Activated CD4-positive, alpha-beta memory T cell treated with anti-CD3 and anti-CD28 coated beads for 36 hours (primary cell): ENCODE measurements at regions of chr17 and their contacts with region 1.

Region 1: GRCh38 chr17:2244545-2245525 is 58.8 kb downstream of the SMG6 start:
- DNase-seq: peak; percentile 89
- H3K4me3 Mint-ChIP-seq: no peak overlapping the region
- H3K27ac Mint-ChIP-seq: peak overlapping the region; percentile 8
- H3K4me1 Mint-ChIP-seq: peaks cover 34% of the 10 kb centered on the region
- H3K27me3 Mint-ChIP-seq: no peaks in the 10 kb centered on the region

Region 2: GRCh38 chr17:2054512-2055291 is 190.1 kb before region 1 on chr17 and contains the start of gene HIC1:
- CTCF ChIA-PET with region 1: interaction called, 288 read pairs
- POLR2A ChIA-PET with region 1: interaction called, 41 read pairs
- intact Hi-C with region 1: loop called (anchors 1 kb)
- DNase-seq: peak; percentile 87
- H3K4me3 Mint-ChIP-seq: peak within 1 kb of the TSS; percentile 68
- H3K27ac Mint-ChIP-seq: peak within 1 kb of the TSS; percentile 33
- H3K4me1 Mint-ChIP-seq: peaks cover 16% of the 10 kb centered on the region
- H3K27me3 Mint-ChIP-seq: peaks cover 12% of the 10 kb centered on the region
- total RNA-seq, gene HIC1: 13.1 to 13.2 TPM

Region 3: DNA sequence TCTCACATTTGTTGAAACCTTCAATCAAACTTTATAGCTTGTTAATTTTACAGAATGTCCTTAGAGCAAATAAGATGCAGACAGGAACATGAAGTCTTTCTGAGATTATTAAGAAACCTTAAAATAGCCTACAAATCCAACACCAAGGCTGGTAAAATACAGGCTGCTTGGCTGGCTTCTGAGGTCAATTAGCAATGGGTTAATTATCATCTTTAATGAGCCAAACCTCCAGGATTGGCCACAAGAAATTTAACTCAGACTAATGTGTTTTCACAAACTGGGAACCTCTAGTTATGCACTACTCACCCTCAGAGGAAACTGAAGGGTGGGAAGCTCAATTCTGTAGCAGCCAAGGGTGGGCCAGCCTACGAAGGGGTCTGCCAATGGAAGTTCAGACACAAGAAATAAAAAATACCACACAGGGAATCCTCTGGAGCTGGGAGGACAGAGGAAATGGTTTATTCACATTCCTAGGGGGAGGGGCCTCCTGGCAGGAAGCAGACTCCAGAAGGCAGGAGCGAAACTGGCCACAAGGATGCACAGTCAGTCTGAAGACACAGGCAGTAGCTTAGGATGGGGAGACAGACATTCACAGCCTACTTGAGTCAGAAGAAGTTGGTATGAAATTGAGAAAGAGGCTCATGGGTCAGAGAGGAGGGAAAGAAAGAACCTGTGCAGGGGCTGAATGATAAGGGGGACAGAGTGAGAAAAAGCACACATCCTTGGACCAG is 153.9 kb before region 1 on chr17:
- CTCF ChIA-PET with region 1: interaction called, 26 read pairs
- POLR2A ChIA-PET with region 1: interaction called, 5 read pairs
- intact Hi-C with region 1: loop called (anchors 1 kb)
- DNase-seq: no peak
- H3K4me3 Mint-ChIP-seq: peak overlapping the region; percentile 83
- H3K27ac Mint-ChIP-seq: peak overlapping the region; percentile 9
- H3K4me1 Mint-ChIP-seq: peaks cover 59% of the 10 kb centered on the region
- H3K27me3 Mint-ChIP-seq: no peaks in the 10 kb centered on the region

Region 4: GRCh38 chr17:2210726-2211125 is 34.1 kb before region 1 on chr17:
- CTCF ChIA-PET with region 1: interaction called, 12 read pairs
- POLR2A ChIA-PET with region 1: no interaction called
- intact Hi-C with region 1: no loop called
- DNase-seq: no peak
- H3K4me3 Mint-ChIP-seq: no peak overlapping the region
- H3K27ac Mint-ChIP-seq: no peak overlapping the region
- H3K4me1 Mint-ChIP-seq: peaks cover 45% of the 10 kb centered on the region
- H3K27me3 Mint-ChIP-seq: no peaks in the 10 kb centered on the region

Region 5: DNA sequence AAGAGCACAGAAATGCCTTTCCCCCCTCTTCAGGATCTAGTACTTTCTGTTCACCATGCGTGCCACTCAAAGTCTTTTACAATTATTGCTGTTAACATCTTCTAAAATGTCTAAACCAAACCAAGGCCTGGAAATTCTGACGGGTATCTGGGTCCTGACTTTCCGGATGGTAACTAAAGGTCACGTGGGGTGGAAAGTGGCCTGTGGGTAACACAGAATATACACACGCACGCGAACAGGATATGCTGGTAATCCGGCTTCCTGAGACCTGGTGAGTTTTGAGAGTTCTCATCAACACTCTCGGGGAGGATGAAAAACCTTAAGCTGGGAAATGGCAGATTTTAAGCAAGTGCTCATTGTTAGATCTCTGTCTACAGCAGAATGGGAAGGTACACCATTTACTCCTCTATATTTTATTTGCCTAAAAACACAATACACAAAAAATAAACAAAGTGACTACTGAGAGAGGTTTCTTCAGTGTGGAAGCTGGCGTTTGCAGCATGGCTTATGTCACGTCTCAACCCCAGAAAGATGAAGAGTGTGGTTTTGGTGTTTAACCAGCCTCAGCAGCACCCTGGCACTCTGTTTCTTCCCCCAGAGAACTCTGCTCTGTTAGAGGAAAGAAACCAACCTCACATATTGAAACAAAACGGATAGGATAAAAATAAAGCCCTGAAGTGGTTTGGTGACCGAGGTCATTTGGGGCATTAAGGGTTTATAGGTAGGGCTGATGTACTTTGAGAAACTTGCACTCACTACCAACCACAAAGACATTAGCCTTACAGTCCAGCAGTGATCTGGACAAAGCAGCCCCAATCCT is 21.4 kb after region 1 on chr17:
- CTCF ChIA-PET with region 1: interaction called, 40 read pairs
- POLR2A ChIA-PET with region 1: interaction called, 9 read pairs
- intact Hi-C with region 1: no loop called
- DNase-seq: peak; percentile 94
- H3K4me3 Mint-ChIP-seq: peak overlapping the region; percentile 79
- H3K27ac Mint-ChIP-seq: peak overlapping the region; percentile 99
- H3K4me1 Mint-ChIP-seq: peaks cover 81% of the 10 kb centered on the region
- H3K27me3 Mint-ChIP-seq: no peaks in the 10 kb centered on the region

Region 6: DNA sequence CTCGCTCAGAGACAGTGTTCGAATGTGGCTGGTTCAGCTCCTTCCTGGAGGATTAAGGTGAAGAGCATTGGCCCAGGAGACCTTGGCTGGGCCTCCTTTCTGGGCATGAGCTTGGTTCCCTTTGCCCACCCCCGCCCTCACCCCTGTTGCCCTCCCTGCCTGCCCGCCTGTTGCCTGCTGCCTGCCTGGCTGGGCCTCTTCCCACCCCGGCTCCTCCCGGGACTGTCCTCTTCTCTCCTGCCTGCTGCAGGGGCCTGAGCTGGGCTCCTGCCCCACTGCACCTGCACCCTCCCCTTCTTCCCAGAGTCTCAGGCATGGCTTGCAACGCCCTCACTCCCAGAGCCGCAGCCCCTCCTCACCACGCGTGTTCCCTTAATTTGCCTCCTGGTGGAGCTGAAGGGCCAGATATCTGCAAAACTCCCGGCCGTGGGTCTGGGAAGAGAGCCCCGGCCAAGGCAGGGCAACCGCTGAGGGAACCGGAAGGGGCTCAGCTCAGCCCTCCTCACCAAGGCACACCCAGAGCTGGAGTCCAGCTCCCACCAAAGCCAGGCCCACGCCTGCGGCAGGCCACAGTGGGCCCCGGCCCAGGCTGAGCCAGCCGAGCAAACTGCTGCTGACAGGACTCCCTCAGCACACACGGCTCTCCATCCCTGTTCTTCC is 124.8 kb after region 1 on chr17:
- CTCF ChIA-PET with region 1: no interaction called
- POLR2A ChIA-PET with region 1: no interaction called
- intact Hi-C with region 1: no loop called
- DNase-seq: no peak
- H3K4me3 Mint-ChIP-seq: no peak overlapping the region
- H3K27ac Mint-ChIP-seq: no peak overlapping the region
- H3K4me1 Mint-ChIP-seq: no peaks in the 10 kb centered on the region
- H3K27me3 Mint-ChIP-seq: no peaks in the 10 kb centered on the region